ENCODE measurements at regions of chr3 and their contacts with region 1.

Region 1: GRCh38 chr3:37855363-37855970 is 6.2 kb upstream of the CTDSPL start:
- DNase-seq: peak; percentile 84
- H3K4me3 Mint-ChIP-seq: no peak overlapping the region
- H3K27ac Mint-ChIP-seq: no peak overlapping the region
- H3K4me1 Mint-ChIP-seq: peaks cover 6% of the 10 kb centered on the region
- H3K27me3 Mint-ChIP-seq: no peaks in the 10 kb centered on the region

Region 2: GRCh38 chr3:37909067-37909911 is 53.8 kb after region 1 on chr3:
- CTCF ChIA-PET with region 1: interaction called, 11 read pairs
- POLR2A ChIA-PET with region 1: no interaction called
- intact Hi-C with region 1: no loop called
- DNase-seq: no peak
- H3K4me3 Mint-ChIP-seq: no peak overlapping the region
- H3K27ac Mint-ChIP-seq: no peak overlapping the region
- H3K4me1 Mint-ChIP-seq: peaks cover 21% of the 10 kb centered on the region
- H3K27me3 Mint-ChIP-seq: no peaks in the 10 kb centered on the region

Region 3: GRCh38 chr3:37967260-37967881 is 111.9 kb after region 1 on chr3:
- CTCF ChIA-PET with region 1: no interaction called
- POLR2A ChIA-PET with region 1: interaction called, 3 read pairs
- intact Hi-C with region 1: loop called (anchors 1 kb)
- DNase-seq: peak; percentile 75
- H3K4me3 Mint-ChIP-seq: no peak overlapping the region
- H3K27ac Mint-ChIP-seq: no peak overlapping the region
- H3K4me1 Mint-ChIP-seq: no peaks in the 10 kb centered on the region
- H3K27me3 Mint-ChIP-seq: no peaks in the 10 kb centered on the region

Region 4: DNA sequence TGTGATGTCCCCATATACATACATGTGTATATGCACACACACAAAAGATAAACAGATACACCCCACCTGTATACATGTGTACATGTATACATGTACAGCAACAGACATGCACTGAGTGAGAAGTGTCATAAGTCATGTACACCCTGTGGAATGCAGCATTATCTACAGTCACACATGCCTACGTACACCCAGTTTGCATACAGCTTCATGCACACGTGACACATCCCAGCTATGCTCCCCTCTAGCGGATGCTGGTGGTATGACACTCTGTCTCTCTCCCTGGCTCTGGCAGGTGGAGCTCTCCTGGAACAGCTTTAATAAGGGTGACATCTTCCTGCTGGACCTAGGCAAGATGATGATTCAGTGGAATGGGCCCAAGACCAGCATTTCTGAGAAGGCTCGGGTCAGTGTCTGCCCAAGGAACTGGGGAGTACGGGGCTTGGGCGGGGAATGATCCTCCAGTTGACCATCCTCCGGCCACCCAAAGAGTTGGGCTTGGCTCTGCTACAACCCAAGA is 141.4 kb after region 1 on chr3:
- CTCF ChIA-PET with region 1: interaction called, 11 read pairs
- POLR2A ChIA-PET with region 1: no interaction called
- intact Hi-C with region 1: no loop called
- DNase-seq: peak; percentile 91
- H3K4me3 Mint-ChIP-seq: no peak overlapping the region
- H3K27ac Mint-ChIP-seq: peak overlapping the region; percentile 94
- H3K4me1 Mint-ChIP-seq: peaks cover 59% of the 10 kb centered on the region
- H3K27me3 Mint-ChIP-seq: no peaks in the 10 kb centered on the region

Measured in activated CD4-positive, alpha-beta memory T cell treated with anti-CD3 and anti-CD28 coated beads for 36 hours (primary cell).